CD8-positive, alpha-beta T cell (primary cell): ENCODE measurements at regions of chr11 and their contacts with region 1.

Region 1: GRCh38 chr11:72024069-72024754 is 25.5 kb downstream of the IL18BP start:
- DNase-seq: no peak
- ATAC-seq: no peak
- H3K4me3 ChIP-seq: no peak overlapping the region
- H3K4me3 Mint-ChIP-seq: no peak overlapping the region
- H3K27ac ChIP-seq: no peak overlapping the region
- H3K27ac Mint-ChIP-seq: no peak overlapping the region
- H3K4me1 ChIP-seq: peaks cover 22% of the 10 kb centered on the region
- H3K4me1 Mint-ChIP-seq: peaks cover 41% of the 10 kb centered on the region
- H3K27me3 ChIP-seq: no peaks in the 10 kb centered on the region
- H3K27me3 Mint-ChIP-seq: no peaks in the 10 kb centered on the region
- CTCF ChIP-seq: no peak

Region 2: GRCh38 chr11:71962428-71963038 is 61.7 kb before region 1 on chr11:
- CTCF ChIA-PET with region 1: no interaction called
- POLR2A ChIA-PET with region 1: no interaction called
- intact Hi-C with region 1: no loop called
- DNase-seq: no peak
- ATAC-seq: no peak
- H3K4me3 ChIP-seq: no peak overlapping the region
- H3K4me3 Mint-ChIP-seq: no peak overlapping the region
- H3K27ac ChIP-seq: no peak overlapping the region
- H3K27ac Mint-ChIP-seq: peak overlapping the region; percentile 37
- H3K4me1 ChIP-seq: no peaks in the 10 kb centered on the region
- H3K4me1 Mint-ChIP-seq: peaks cover 3% of the 10 kb centered on the region
- H3K27me3 ChIP-seq: no peaks in the 10 kb centered on the region
- H3K27me3 Mint-ChIP-seq: no peaks in the 10 kb centered on the region
- CTCF ChIP-seq: no peak

Region 3: DNA sequence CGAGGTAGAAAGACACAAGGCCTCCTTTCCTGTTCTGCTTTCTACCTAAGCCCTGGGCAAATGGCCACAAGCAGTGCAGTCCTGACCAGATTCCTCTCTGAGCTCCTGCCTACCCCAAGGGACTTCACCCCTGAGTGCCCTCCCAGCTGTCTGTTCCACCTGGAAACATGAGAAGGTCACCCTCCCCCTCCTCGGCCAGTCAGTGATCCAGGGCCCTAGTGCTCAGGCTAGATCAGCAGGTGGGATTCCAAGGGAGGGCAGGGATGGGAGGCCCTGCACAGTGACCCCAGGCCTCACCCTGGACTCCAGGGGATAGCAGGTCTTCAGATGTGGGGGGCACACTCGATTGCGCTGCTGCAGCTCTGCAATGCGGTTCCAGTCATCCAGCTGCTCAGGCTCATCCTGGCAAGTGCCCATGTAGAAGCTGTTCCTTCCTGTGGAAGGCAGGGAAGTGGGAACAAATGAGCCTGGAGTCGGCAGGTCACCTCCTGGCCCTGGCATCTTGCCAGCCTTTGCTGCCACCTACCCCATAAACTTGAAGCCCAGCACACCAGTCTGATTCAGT is 19.2 kb before region 1 on chr11:
- CTCF ChIA-PET with region 1: interaction called, 16 read pairs
- POLR2A ChIA-PET with region 1: no interaction called
- intact Hi-C with region 1: no loop called
- DNase-seq: no peak
- ATAC-seq: no peak
- H3K4me3 ChIP-seq: no peak overlapping the region
- H3K4me3 Mint-ChIP-seq: no peak overlapping the region
- H3K27ac ChIP-seq: no peak overlapping the region
- H3K27ac Mint-ChIP-seq: no peak overlapping the region
- H3K4me1 ChIP-seq: peaks cover 5% of the 10 kb centered on the region
- H3K4me1 Mint-ChIP-seq: peaks cover 11% of the 10 kb centered on the region
- H3K27me3 ChIP-seq: no peaks in the 10 kb centered on the region
- H3K27me3 Mint-ChIP-seq: no peaks in the 10 kb centered on the region
- CTCF ChIP-seq: no peak

Region 4: GRCh38 chr11:72075109-72075508 is 50.9 kb after region 1 on chr11:
- CTCF ChIA-PET with region 1: interaction called, 16 read pairs
- POLR2A ChIA-PET with region 1: no interaction called
- intact Hi-C with region 1: loop called in 1 of 2 experiments (anchors 1 kb)
- DNase-seq: peak in 2 of 9 experiments; percentile 18 to 40
- ATAC-seq: no peak
- H3K4me3 ChIP-seq: no peak overlapping the region
- H3K4me3 Mint-ChIP-seq: no peak overlapping the region
- H3K27ac ChIP-seq: no peak overlapping the region
- H3K27ac Mint-ChIP-seq: no peak overlapping the region
- H3K4me1 ChIP-seq: peaks cover 6% of the 10 kb centered on the region
- H3K4me1 Mint-ChIP-seq: peaks cover 31% of the 10 kb centered on the region
- H3K27me3 ChIP-seq: no peaks in the 10 kb centered on the region
- H3K27me3 Mint-ChIP-seq: no peaks in the 10 kb centered on the region
- CTCF ChIP-seq: no peak